ENCODE measurements at regions of chr19 and their contacts with region 1.

Region 1: GRCh38 chr19:14073261-14073924 is 807 bp downstream of the MISP3 start:
- DNase-seq: peak; percentile 81
- ATAC-seq: peak; percentile 68
- H3K4me3 Mint-ChIP-seq: peak overlapping the region; percentile 94
- H3K27ac Mint-ChIP-seq: peak overlapping the region; percentile 76
- H3K4me1 Mint-ChIP-seq: peaks cover 11% of the 10 kb centered on the region
- H3K27me3 Mint-ChIP-seq: peaks cover 2% of the 10 kb centered on the region
- CTCF ChIP-seq: peak; percentile 61

Region 2: GRCh38 chr19:14031719-14032480 is 41.5 kb before region 1 on chr19 and contains the start of gene IL27RA:
- CTCF ChIA-PET with region 1: interaction called, 10 read pairs
- POLR2A ChIA-PET with region 1: no interaction called
- intact Hi-C with region 1: no loop called
- DNase-seq: peak; percentile 84
- ATAC-seq: peak; percentile 78
- H3K4me3 Mint-ChIP-seq: peak within 1 kb of the TSS; percentile 94
- H3K27ac Mint-ChIP-seq: peak within 1 kb of the TSS; percentile 93
- H3K4me1 Mint-ChIP-seq: peaks cover 23% of the 10 kb centered on the region
- H3K27me3 Mint-ChIP-seq: no peaks in the 10 kb centered on the region
- CTCF ChIP-seq: peak; percentile 80
- total RNA-seq, gene IL27RA: 46.5 to 48.2 TPM

Region 3: GRCh38 chr19:14059093-14059480 is 14.3 kb before region 1 on chr19:
- CTCF ChIA-PET with region 1: interaction called, 86 read pairs
- POLR2A ChIA-PET with region 1: interaction called, 3 read pairs
- intact Hi-C with region 1: no loop called
- DNase-seq: peak; percentile 77
- ATAC-seq: peak; percentile 77
- H3K4me3 Mint-ChIP-seq: no peak overlapping the region
- H3K27ac Mint-ChIP-seq: no peak overlapping the region
- H3K4me1 Mint-ChIP-seq: peaks cover 16% of the 10 kb centered on the region
- H3K27me3 Mint-ChIP-seq: peaks cover 37% of the 10 kb centered on the region
- CTCF ChIP-seq: peak; percentile 91

Region 4: GRCh38 chr19:14117668-14118164 is 44.3 kb after region 1 on chr19 and contains the start of gene PRKACA:
- CTCF ChIA-PET with region 1: interaction called, 12 read pairs
- POLR2A ChIA-PET with region 1: interaction called, 3 read pairs
- intact Hi-C with region 1: no loop called
- DNase-seq: peak; percentile 99
- ATAC-seq: peak; percentile 96
- H3K4me3 Mint-ChIP-seq: peak within 1 kb of the TSS; percentile 90
- H3K27ac Mint-ChIP-seq: peak within 1 kb of the TSS; percentile 83
- H3K4me1 Mint-ChIP-seq: peaks cover 44% of the 10 kb centered on the region
- H3K27me3 Mint-ChIP-seq: no peaks in the 10 kb centered on the region
- CTCF ChIP-seq: no peak
- total RNA-seq, gene PRKACA: 61.0 to 61.5 TPM

Region 5: GRCh38 chr19:14147797-14148605 is 74.6 kb after region 1 on chr19:
- CTCF ChIA-PET with region 1: no interaction called
- POLR2A ChIA-PET with region 1: no interaction called
- intact Hi-C with region 1: no loop called
- DNase-seq: peak; percentile 73
- ATAC-seq: peak; percentile 78
- H3K4me3 Mint-ChIP-seq: peak overlapping the region; percentile 60
- H3K27ac Mint-ChIP-seq: peak overlapping the region; percentile 88
- H3K4me1 Mint-ChIP-seq: peaks cover 38% of the 10 kb centered on the region
- H3K27me3 Mint-ChIP-seq: no peaks in the 10 kb centered on the region
- CTCF ChIP-seq: peak; percentile 68